ENCODE measurements at regions of chr4 and their contacts with region 1.

Region 1: DNA sequence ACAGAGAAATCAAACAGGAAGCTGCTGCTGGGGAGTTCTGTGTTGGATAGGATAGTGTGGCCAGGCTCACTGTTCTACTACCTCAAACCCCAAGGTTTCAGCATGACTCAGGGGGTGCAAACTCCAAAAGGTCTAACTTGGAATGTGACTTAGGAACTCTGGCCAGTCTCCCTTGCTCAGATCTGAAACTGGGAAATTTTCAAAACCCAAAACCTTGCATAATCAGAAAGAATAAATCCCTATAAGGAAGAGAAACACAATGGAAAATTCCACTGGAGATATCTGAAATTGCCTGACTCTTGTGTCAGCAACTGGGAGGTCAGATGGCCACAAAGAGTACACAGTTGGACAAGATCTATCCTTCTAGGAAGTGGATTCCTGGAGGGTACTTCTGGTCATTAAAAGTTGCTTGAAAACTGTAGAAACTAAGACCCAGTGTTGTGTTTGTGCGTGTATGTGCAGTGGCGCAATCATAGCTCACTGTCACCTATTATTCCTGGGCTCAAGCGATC is 58.0 kb downstream of the PPEF2 start:
- DNase-seq: no peak
- H3K4me3 ChIP-seq: no peak overlapping the region
- H3K27ac ChIP-seq: no peak overlapping the region
- H3K4me1 ChIP-seq: peaks cover 0 to 8% (median 4%) of the 10 kb centered on the region in 4 experiments; a peak in 3 of 7 replicates
- H3K27me3 ChIP-seq: peaks cover 0 to 2% (median 0%) of the 10 kb centered on the region in 4 experiments; a peak in 1 of 7 replicates
- CTCF ChIP-seq: no peak
- EP300 ChIP-seq: no peak
- POLR2A ChIP-seq: no peak
- RAD21 ChIP-seq: no peak

Region 2: GRCh38 chr4:75660491-75660890 is 183.7 kb before region 1 on chr4:
- CTCF ChIA-PET with region 1: no interaction called
- POLR2A ChIA-PET with region 1: no interaction called
- DNase-seq: no peak
- H3K4me3 ChIP-seq: no peak overlapping the region
- H3K27ac ChIP-seq: no peak overlapping the region
- H3K4me1 ChIP-seq: no peaks in the 10 kb centered on the region; a peak in 1 of 7 replicates
- H3K27me3 ChIP-seq: no peaks in the 10 kb centered on the region
- CTCF ChIP-seq: no peak
- EP300 ChIP-seq: no peak
- POLR2A ChIP-seq: no peak
- RAD21 ChIP-seq: no peak

Region 3: GRCh38 chr4:75705198-75705977 is 138.8 kb before region 1 on chr4:
- CTCF ChIA-PET with region 1: no interaction called
- POLR2A ChIA-PET with region 1: no interaction called
- DNase-seq: peak; percentile 67 to 75
- H3K4me3 ChIP-seq: no peak overlapping the region; a peak in 1 of 8 replicates
- H3K27ac ChIP-seq: peak overlapping the region; percentile 65; the same call in 1 of the 2 replicates
- H3K4me1 ChIP-seq: peaks cover 15 to 24% (median 19%) of the 10 kb centered on the region in 4 experiments
- H3K27me3 ChIP-seq: no peaks in the 10 kb centered on the region
- CTCF ChIP-seq: peak in 2 of 3 experiments; percentile 26 to 32; a peak in 2 of 4 replicates
- EP300 ChIP-seq: no peak
- POLR2A ChIP-seq: no peak
- RAD21 ChIP-seq: peak; percentile 12 to 16; a peak in 2 of 4 replicates

Region 4: GRCh38 chr4:75800972-75801371 is 43.2 kb before region 1 on chr4:
- CTCF ChIA-PET with region 1: interaction called, 12 read pairs
- POLR2A ChIA-PET with region 1: no interaction called
- DNase-seq: no peak
- H3K4me3 ChIP-seq: no peak overlapping the region
- H3K27ac ChIP-seq: no peak overlapping the region
- H3K4me1 ChIP-seq: no peaks in the 10 kb centered on the region
- H3K27me3 ChIP-seq: no peaks in the 10 kb centered on the region
- CTCF ChIP-seq: no peak
- EP300 ChIP-seq: no peak
- POLR2A ChIP-seq: no peak
- RAD21 ChIP-seq: no peak

Region 5: GRCh38 chr4:75831856-75832405 is 12.3 kb before region 1 on chr4:
- CTCF ChIA-PET with region 1: interaction called, 17 read pairs
- POLR2A ChIA-PET with region 1: no interaction called
- DNase-seq: no peak
- H3K4me3 ChIP-seq: peak overlapping the region in 1 of 4 experiments; percentile 26; a peak in 1 of 8 replicates
- H3K27ac ChIP-seq: no peak overlapping the region
- H3K4me1 ChIP-seq: peaks cover 0 to 3% (median under 1%) of the 10 kb centered on the region in 4 experiments; a peak in 3 of 7 replicates
- H3K27me3 ChIP-seq: no peaks in the 10 kb centered on the region
- CTCF ChIP-seq: no peak
- EP300 ChIP-seq: no peak
- POLR2A ChIP-seq: no peak
- RAD21 ChIP-seq: no peak

Region 6: GRCh38 chr4:76166480-76166879 is 322.3 kb after region 1 on chr4:
- CTCF ChIA-PET with region 1: no interaction called
- POLR2A ChIA-PET with region 1: no interaction called
- DNase-seq: no peak
- H3K4me3 ChIP-seq: no peak overlapping the region
- H3K27ac ChIP-seq: no peak overlapping the region
- H3K4me1 ChIP-seq: no peaks in the 10 kb centered on the region
- H3K27me3 ChIP-seq: no peaks in the 10 kb centered on the region
- CTCF ChIP-seq: no peak
- EP300 ChIP-seq: no peak
- POLR2A ChIP-seq: no peak
- RAD21 ChIP-seq: no peak

Measured in H1 (cell line).